Activated CD8-positive, alpha-beta T cell treated with anti-CD3 and anti-CD28 coated beads, Interleukin-2, amount 10 ng/mL, durations not matched to agents 7 days and 5 days (primary cell): ENCODE measurements at regions of chr6 and their contacts with region 1.

Region 1: DNA sequence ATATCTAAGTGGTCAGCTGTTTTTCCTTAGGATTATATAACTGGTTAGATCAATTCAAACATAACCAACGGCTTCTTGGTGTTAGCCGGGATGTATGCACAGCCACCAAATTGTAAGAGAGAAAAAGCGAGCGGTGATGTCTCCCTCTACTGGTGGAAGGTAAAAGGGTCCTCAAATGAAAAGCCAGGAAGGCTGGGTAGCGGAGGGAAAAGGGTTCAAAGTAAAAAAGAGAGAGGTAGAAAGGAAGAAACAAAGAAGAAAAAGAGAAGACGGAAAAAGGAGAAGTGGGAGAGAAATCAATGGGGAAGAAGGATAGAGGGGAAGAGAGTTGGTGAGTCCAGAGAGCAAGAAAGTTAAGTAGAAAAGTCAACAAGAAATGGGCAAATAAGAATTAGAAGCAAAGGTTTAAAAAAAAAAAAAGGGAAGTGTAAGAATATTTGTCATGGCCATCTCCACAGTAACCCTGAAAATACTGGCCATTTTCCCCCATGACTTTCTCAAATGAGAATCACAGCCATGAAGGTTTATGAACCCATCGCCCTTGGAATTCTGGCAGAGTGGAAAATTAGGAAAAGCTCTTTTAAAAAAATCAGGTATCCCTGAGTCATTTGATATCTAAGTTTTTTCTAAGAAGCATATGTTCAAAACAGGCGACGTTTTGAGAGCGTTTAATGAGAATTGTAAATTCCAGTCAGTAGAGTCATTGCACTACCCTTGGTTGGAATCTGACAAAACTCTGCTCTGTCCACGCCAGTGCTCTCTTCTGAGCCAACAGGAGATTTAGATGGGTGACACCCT is 155.6 kb upstream of the SNX9 start:
- DNase-seq: peak; percentile 74
- ATAC-seq: peak; percentile 81
- H3K4me3 Mint-ChIP-seq: no peak overlapping the region
- H3K27ac Mint-ChIP-seq: no peak overlapping the region
- H3K4me1 Mint-ChIP-seq: peaks cover 22% of the 10 kb centered on the region
- H3K27me3 Mint-ChIP-seq: peaks cover 6% of the 10 kb centered on the region

Region 2: GRCh38 chr6:157614026-157614568 is 53.3 kb before region 1 on chr6:
- CTCF ChIA-PET with region 1: interaction called, 13 read pairs
- POLR2A ChIA-PET with region 1: interaction called, 3 read pairs
- DNase-seq: no peak
- ATAC-seq: no peak
- H3K4me3 Mint-ChIP-seq: no peak overlapping the region
- H3K27ac Mint-ChIP-seq: no peak overlapping the region
- H3K4me1 Mint-ChIP-seq: no peaks in the 10 kb centered on the region
- H3K27me3 Mint-ChIP-seq: no peaks in the 10 kb centered on the region

Region 3: GRCh38 chr6:157946865-157947532 is 279.6 kb after region 1 on chr6:
- CTCF ChIA-PET with region 1: interaction called, 15 read pairs
- POLR2A ChIA-PET with region 1: no interaction called
- DNase-seq: no peak
- ATAC-seq: peak; percentile 78
- H3K4me3 Mint-ChIP-seq: no peak overlapping the region
- H3K27ac Mint-ChIP-seq: no peak overlapping the region
- H3K4me1 Mint-ChIP-seq: peaks cover 7% of the 10 kb centered on the region
- H3K27me3 Mint-ChIP-seq: peaks cover 12% of the 10 kb centered on the region